Cardiac septum (tissue), 1 donor: ENCODE measurements at regions of chr3 and their contacts with region 1.

Region 1: GRCh38 chr3:138923531-138923994 is 23.4 kb downstream of the FOXL2 start:
- DNase-seq: peak; percentile 86

Region 2: GRCh38 chr3:138417559-138417982 is 506.0 kb before region 1 on chr3:
- intact Hi-C with region 1: loop called (anchors 10 kb)
- DNase-seq: peak; percentile 82

Region 3: DNA sequence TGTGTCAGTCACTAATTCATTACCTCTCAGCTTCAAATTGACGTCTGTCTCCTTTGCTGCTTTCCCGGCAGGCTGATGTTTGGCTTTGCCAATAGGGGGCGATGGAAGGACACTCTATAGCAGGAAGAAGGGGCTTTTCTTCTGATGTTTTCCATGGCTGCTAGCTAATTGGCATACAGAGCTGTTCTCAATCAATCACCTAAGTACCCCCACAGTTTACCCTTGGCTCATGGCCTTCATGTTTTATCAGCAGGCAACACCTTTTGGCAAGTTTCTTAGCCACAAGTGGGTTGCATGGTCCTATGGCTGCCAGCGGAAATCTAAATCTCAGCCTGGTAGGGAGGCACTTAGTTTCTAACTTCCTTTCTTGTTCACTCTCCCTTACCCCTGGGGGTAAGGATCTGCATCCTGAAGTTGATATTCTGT is 444.1 kb before region 1 on chr3:
- intact Hi-C with region 1: loop called (anchors 5 kb)
- DNase-seq: no peak